ENCODE measurements at regions of chr10 and their contacts with region 1.

Region 1: GRCh38 chr10:70925377-70926225 is 37.2 kb upstream of the PCBD1 start:
- DNase-seq: no peak
- ATAC-seq: peak; percentile 87
- H3K4me3 ChIP-seq: no peak overlapping the region
- H3K27ac ChIP-seq: no peak overlapping the region
- H3K4me1 ChIP-seq: no peaks in the 10 kb centered on the region
- H3K27me3 ChIP-seq: peaks cover 14% of the 10 kb centered on the region; the same call in 1 of the 2 replicates
- CTCF ChIP-seq: peak; percentile 100

Region 2: DNA sequence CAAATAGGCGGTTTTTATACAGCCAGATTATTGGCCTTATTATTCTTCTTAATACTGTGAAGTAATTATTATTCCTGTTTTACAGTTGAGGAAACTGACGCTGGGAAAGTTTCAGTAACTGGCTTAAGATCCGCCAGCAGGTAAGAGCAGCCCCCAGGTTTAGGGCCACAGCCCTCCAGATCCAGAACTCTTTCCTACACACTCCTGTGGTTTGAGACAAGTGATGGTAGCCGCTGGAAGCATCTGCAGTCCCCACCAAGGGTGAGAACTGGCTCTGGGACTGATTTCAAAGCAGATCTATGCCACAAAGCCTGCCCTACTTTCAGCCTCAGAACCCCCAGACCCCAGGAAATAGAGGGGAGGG is 283.7 kb after region 1 on chr10:
- CTCF ChIA-PET with region 1: interaction called, 6 read pairs
- POLR2A ChIA-PET with region 1: no interaction called
- in situ Hi-C with region 1: no loop called
- intact Hi-C with region 1: loop called (anchors 2 kb)
- DNase-seq: no peak
- ATAC-seq: no peak
- H3K4me3 ChIP-seq: no peak overlapping the region
- H3K27ac ChIP-seq: no peak overlapping the region
- H3K4me1 ChIP-seq: peaks cover 12% of the 10 kb centered on the region; the same call in 1 of the 2 replicates
- H3K27me3 ChIP-seq: peaks cover 50% of the 10 kb centered on the region
- CTCF ChIP-seq: peak; percentile 62; the same call in 1 of the 2 replicates

Measured in Panc1 (cell line).